Calu3 (cell line): ENCODE measurements at regions of chr3 and their contacts with region 1.

Region 1: GRCh38 chr3:128969993-128970739 is 23.7 kb downstream of the CFAP92 start:
- DNase-seq: peak; percentile 71
- H3K4me3 Mint-ChIP-seq: no peak overlapping the region
- H3K27ac Mint-ChIP-seq: no peak overlapping the region
- H3K4me1 Mint-ChIP-seq: no peaks in the 10 kb centered on the region
- H3K27me3 Mint-ChIP-seq: peaks cover 74% of the 10 kb centered on the region
- CTCF ChIP-seq: peak; percentile 97

Region 2: DNA sequence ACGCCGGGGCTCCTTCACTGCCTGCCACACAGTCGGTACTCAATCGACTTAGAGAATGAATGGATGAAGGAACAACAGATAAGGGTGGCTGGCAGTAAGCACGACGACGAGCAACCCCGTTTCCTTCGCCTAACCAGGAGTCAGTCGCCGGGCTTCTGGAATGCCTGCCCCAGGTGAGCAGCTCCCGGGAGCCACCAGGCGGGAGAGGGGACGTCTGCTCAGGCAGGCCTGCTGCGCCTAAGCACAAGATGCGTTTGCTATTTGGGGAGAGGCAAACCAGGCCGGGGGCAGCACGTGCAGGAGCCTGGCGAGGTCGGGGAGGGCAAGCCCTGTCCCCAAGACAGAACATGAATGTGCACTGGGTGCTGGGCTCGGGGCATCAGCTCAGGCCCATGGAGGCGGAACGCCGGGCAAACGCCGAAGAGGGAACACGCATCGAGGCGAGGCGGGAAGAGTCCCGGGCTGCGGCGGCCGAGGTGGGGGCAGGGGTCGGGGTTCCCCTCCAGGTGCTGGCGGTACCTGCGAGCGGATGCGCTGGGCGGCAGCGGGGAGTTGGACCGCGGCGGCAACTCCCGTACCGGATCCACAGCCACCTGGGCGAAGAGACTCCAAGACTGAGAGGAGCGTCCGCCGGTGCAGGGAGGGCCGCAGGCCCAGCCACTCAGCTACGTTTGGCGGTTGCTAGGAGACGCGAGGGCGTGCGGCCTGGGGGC is 23.5 kb after region 1 on chr3 and contains the start of gene CFAP92:
- CTCF ChIA-PET with region 1: interaction called, 13 read pairs
- intact Hi-C with region 1: no loop called
- DNase-seq: peak; percentile 97
- H3K4me3 Mint-ChIP-seq: peak within 1 kb of the TSS; percentile 75
- H3K27ac Mint-ChIP-seq: peak within 1 kb of the TSS; percentile 60
- H3K4me1 Mint-ChIP-seq: peaks cover 16% of the 10 kb centered on the region
- H3K27me3 Mint-ChIP-seq: peaks cover 83% of the 10 kb centered on the region
- CTCF ChIP-seq: no peak
- total RNA-seq, gene CFAP92: 0.92 and 1.3 TPM in 2 replicates

Region 3: DNA sequence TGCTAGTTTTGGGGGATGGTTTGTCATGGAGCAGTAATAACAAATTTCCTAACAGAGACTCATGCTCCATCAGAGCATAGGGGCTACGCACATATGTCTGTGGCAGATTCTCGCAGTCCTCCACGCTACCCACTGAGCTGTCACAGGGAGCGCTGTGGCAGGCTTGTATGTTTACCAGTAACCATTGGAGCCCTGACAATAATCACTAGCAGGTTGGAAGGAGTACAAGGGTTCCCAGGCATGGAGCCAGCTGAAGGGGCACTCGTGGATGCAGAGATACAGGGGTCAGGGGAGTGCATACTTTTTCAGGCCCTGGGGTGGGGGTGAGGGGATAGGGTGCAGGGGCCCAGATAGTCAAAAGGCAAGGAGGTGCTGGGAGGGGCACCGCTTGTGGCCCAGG is 82.5 kb after region 1 on chr3:
- CTCF ChIA-PET with region 1: interaction called, 31 read pairs
- intact Hi-C with region 1: no loop called
- DNase-seq: no peak
- H3K4me3 Mint-ChIP-seq: no peak overlapping the region
- H3K27ac Mint-ChIP-seq: no peak overlapping the region
- H3K4me1 Mint-ChIP-seq: peaks cover 38% of the 10 kb centered on the region
- H3K27me3 Mint-ChIP-seq: peaks cover 28% of the 10 kb centered on the region
- CTCF ChIP-seq: no peak

Region 4: DNA sequence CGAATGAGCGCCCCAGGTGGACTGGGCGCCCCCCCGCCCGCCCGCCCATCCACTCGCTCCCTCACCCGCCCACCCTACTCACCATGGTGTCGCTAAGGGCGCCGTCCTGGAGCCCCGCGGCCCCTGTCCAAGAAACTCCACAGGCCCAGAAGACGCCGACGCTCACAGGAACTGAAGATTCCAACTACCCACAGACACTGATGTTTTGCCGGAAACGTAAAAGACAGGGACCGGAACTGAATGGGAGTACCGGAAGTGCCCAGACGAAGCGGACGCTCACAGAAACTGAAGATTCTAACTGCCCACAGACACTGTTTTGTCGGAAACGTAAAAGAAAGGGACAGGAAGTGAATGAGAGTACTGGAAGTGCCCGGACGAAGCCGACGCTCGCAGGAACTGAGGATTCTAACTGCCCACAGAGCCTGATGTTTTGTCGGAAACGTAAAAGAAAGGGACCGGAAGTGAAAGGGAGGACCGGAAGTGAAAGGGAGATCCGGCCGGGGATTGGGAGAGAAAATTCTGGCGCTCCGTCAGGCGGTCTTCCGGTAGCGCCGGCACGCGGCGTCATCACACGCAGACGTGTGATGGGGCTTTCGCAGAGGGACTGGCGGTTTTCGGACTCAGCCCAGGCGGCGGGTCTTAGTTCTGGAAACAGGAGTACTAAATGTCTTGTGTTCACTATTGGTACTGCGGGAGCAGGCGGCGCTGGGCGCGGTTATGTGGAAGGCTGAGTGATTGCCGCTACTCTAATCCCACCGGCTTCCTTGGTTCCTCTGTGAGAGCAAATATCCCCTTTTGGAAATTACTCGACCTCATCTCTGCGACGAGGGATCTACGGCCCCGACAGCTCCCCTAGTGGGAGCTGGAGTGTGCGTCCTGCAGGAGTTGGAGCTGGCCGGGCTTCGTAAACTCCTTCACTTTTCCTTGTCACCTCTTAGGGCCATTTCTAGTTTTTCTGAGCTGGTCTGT is 191.0 kb after region 1 on chr3 and contains the start of gene ISY1:
- CTCF ChIA-PET with region 1: interaction called, 19 read pairs
- intact Hi-C with region 1: no loop called
- DNase-seq: peak; percentile 96
- H3K4me3 Mint-ChIP-seq: peak within 1 kb of the TSS; percentile 90
- H3K27ac Mint-ChIP-seq: peak within 1 kb of the TSS; percentile 99
- H3K4me1 Mint-ChIP-seq: peaks cover 35% of the 10 kb centered on the region
- H3K27me3 Mint-ChIP-seq: no peaks in the 10 kb centered on the region
- CTCF ChIP-seq: peak; percentile 86
- total RNA-seq, gene ISY1: 63.8 and 77.0 TPM in 2 replicates

Region 5: GRCh38 chr3:129316131-129317013 is 346.2 kb after region 1 on chr3:
- CTCF ChIA-PET with region 1: interaction called, 11 read pairs
- intact Hi-C with region 1: no loop called
- DNase-seq: peak; percentile 95
- H3K4me3 Mint-ChIP-seq: peak overlapping the region; percentile 76
- H3K27ac Mint-ChIP-seq: peak overlapping the region; percentile 77
- H3K4me1 Mint-ChIP-seq: peaks cover 11% of the 10 kb centered on the region
- H3K27me3 Mint-ChIP-seq: no peaks in the 10 kb centered on the region
- CTCF ChIP-seq: peak; percentile 89